ENCODE measurements at regions of chr1 and their contacts with region 1.

Region 1: DNA sequence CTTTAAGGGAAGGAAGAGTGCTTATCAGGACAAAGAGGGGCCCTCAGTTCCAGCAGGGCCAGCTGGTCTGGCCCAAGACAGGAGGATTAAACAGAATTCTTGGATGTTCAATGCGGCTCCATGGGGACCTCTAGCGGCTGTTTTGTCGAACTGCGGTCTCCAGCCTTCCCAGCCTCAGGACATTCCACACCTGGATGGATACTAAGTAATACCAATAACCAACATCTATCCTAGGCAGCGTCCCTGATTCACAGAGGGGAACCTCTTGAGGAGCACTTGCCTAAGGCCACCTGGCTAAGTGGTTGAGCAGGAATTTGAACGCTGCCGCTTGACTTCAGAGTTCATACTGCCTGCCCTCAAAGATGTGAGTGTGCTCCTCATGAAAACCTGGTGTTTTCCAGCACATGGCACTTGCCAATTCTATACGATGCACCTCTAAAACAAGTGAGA is 15.5 kb upstream of the CD247 start:
- DNase-seq: peak; percentile 56
- H3K4me3 ChIP-seq: no peak overlapping the region
- H3K27ac ChIP-seq: no peak overlapping the region
- H3K4me1 ChIP-seq: peaks cover 6% of the 10 kb centered on the region
- H3K27me3 ChIP-seq: no peaks in the 10 kb centered on the region
- CTCF ChIP-seq: peak; percentile 94

Region 2: GRCh38 chr1:167066333-167067122 is 467.3 kb before region 1 on chr1:
- intact Hi-C with region 1: loop called (anchors 5 kb)
- DNase-seq: peak; percentile 72
- H3K4me3 ChIP-seq: peak overlapping the region; percentile 42
- H3K27ac ChIP-seq: no peak overlapping the region
- H3K4me1 ChIP-seq: peaks cover 4% of the 10 kb centered on the region
- H3K27me3 ChIP-seq: peaks cover 7% of the 10 kb centered on the region
- CTCF ChIP-seq: peak; percentile 98

Region 3: GRCh38 chr1:167196166-167196565 is 337.7 kb before region 1 on chr1:
- intact Hi-C with region 1: no loop called
- DNase-seq: no peak
- H3K4me3 ChIP-seq: no peak overlapping the region
- H3K27ac ChIP-seq: no peak overlapping the region
- H3K4me1 ChIP-seq: peaks cover 12% of the 10 kb centered on the region
- H3K27me3 ChIP-seq: no peaks in the 10 kb centered on the region
- CTCF ChIP-seq: no peak

Region 4: DNA sequence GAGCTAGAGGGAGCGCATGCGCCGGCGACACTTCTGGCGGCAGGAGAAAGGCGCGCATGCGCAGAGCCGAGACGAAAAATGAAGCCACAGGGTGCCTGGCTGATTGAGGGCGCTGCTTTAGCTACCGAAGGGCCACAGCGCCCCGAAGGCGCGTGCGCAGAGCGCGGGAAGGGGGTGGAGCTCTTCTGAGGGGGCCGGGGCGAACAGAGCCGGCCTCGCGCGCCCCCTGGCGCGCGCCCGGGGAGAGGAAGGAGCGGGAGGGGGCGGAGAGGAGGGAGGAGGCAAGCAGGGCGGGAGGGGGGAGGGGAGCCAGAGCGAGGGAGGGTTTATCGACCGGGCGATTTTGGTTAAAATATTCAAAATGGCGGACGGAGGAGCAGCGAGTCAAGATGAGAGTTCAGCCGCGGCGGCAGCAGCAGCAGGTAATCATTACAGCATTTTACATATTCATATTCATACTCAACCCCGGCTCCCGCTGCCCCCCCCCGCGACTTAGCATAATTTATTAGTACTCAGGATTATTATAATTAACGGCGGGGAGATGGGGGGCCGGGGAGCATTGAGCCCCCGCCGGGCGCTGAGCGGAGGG is 313.2 kb before region 1 on chr1 and contains the start of gene POU2F1:
- intact Hi-C with region 1: no loop called
- DNase-seq: peak; percentile 99
- H3K4me3 ChIP-seq: peak within 1 kb of the TSS; percentile 99
- H3K27ac ChIP-seq: peak within 1 kb of the TSS; percentile 96
- H3K4me1 ChIP-seq: peaks cover 46% of the 10 kb centered on the region
- H3K27me3 ChIP-seq: no peaks in the 10 kb centered on the region
- CTCF ChIP-seq: peak; percentile 70
- total RNA-seq, gene POU2F1: 7.5 TPM

Region 5: GRCh38 chr1:167263819-167264464 is 269.9 kb before region 1 on chr1:
- intact Hi-C with region 1: loop called (anchors 10 kb)
- DNase-seq: no peak
- H3K4me3 ChIP-seq: no peak overlapping the region
- H3K27ac ChIP-seq: no peak overlapping the region
- H3K4me1 ChIP-seq: peaks cover 81% of the 10 kb centered on the region
- H3K27me3 ChIP-seq: no peaks in the 10 kb centered on the region
- CTCF ChIP-seq: no peak

Measured in left ventricle myocardium inferior (tissue), 1 donor.